Naive thymus-derived CD4-positive, alpha-beta T cell (primary cell): ENCODE measurements at regions of chr12 and their contacts with region 1.

Region 1: GRCh38 chr12:39272871-39273770 is 169.8 kb downstream of the KIF21A start:
- DNase-seq: peak in 5 of 9 donors; percentile 3 to 25 (median 13)
- ATAC-seq: no peak
- H3K4me3 ChIP-seq: no peak overlapping the region
- H3K4me3 Mint-ChIP-seq: no peak overlapping the region
- H3K27ac ChIP-seq: no peak overlapping the region
- H3K27ac Mint-ChIP-seq: no peak overlapping the region
- H3K4me1 ChIP-seq: no peaks in the 10 kb centered on the region
- H3K4me1 Mint-ChIP-seq: peaks cover 0 to 4% (median 0%) of the 10 kb centered on the region in 7 donors
- H3K27me3 ChIP-seq: no peaks in the 10 kb centered on the region
- H3K27me3 Mint-ChIP-seq: peaks cover 10 to 29% (median 17%) of the 10 kb centered on the region in 5 donors

Region 2: GRCh38 chr12:38138225-38139221 is 1134.6 kb before region 1 on chr12:
- CTCF ChIA-PET with region 1: interaction called, 5 read pairs
- POLR2A ChIA-PET with region 1: no interaction called
- intact Hi-C with region 1: loop called (anchors 1 to 2 kb)
- DNase-seq: peak in 8 of 9 donors; percentile 26 to 65 (median 54)
- ATAC-seq: peak; percentile 74
- H3K4me3 ChIP-seq: peak overlapping the region; percentile 31
- H3K4me3 Mint-ChIP-seq: peak overlapping the region; percentile 45 to 89 (median 80)
- H3K27ac ChIP-seq: no peak overlapping the region
- H3K27ac Mint-ChIP-seq: peak overlapping the region in 4 of 9 donors; percentile 33 to 71 (median 53)
- H3K4me1 ChIP-seq: peaks cover 0 to 3% of the 10 kb centered on the region in 2 donors
- H3K4me1 Mint-ChIP-seq: peaks cover 0 to 13% (median 9%) of the 10 kb centered on the region in 7 donors
- H3K27me3 ChIP-seq: no peaks in the 10 kb centered on the region
- H3K27me3 Mint-ChIP-seq: peaks cover 0 to 29% (median 18%) of the 10 kb centered on the region in 5 donors

Region 3: DNA sequence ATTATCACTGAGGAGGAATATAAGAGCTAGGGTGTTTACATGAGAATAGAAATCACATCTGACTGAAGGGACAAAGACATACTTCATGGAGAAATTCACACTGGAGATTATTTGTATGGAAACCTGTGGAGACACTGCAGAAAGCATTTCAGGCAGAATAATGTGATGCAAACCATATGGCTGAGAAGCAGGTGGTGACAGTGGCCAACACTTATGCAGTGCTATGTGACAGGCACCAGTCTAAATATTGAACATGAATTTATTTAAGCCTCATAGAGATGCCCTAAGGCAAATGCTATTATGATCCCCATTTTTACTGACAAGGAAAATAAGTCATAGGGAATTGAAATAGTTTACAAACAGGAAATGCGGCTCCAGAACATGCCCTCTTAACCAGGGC is 940.3 kb before region 1 on chr12:
- CTCF ChIA-PET with region 1: interaction called, 9 read pairs
- POLR2A ChIA-PET with region 1: no interaction called
- intact Hi-C with region 1: loop called in 1 of 2 experiments (anchors 2 kb)
- DNase-seq: no peak
- ATAC-seq: no peak
- H3K4me3 ChIP-seq: no peak overlapping the region
- H3K4me3 Mint-ChIP-seq: no peak overlapping the region
- H3K27ac ChIP-seq: no peak overlapping the region
- H3K27ac Mint-ChIP-seq: no peak overlapping the region
- H3K4me1 ChIP-seq: no peaks in the 10 kb centered on the region
- H3K4me1 Mint-ChIP-seq: peaks cover 0 to 4% (median 0%) of the 10 kb centered on the region in 7 donors
- H3K27me3 ChIP-seq: no peaks in the 10 kb centered on the region
- H3K27me3 Mint-ChIP-seq: no peaks in the 10 kb centered on the region

Region 4: GRCh38 chr12:40874868-40875267 is 1601.7 kb after region 1 on chr12:
- CTCF ChIA-PET with region 1: no interaction called
- POLR2A ChIA-PET with region 1: no interaction called
- intact Hi-C with region 1: no loop called
- DNase-seq: no peak
- ATAC-seq: no peak
- H3K4me3 ChIP-seq: no peak overlapping the region
- H3K4me3 Mint-ChIP-seq: no peak overlapping the region
- H3K27ac ChIP-seq: no peak overlapping the region
- H3K27ac Mint-ChIP-seq: no peak overlapping the region
- H3K4me1 ChIP-seq: no peaks in the 10 kb centered on the region
- H3K4me1 Mint-ChIP-seq: no peaks in the 10 kb centered on the region
- H3K27me3 ChIP-seq: no peaks in the 10 kb centered on the region
- H3K27me3 Mint-ChIP-seq: no peaks in the 10 kb centered on the region